ENCODE measurements at regions of chr20 and their contacts with region 1.

Region 1: GRCh38 chr20:50070991-50071888 is 41.7 kb downstream of the UBE2V1 start:
- DNase-seq: peak; percentile 48
- ATAC-seq: peak; percentile 99
- H3K4me3 ChIP-seq: peak overlapping the region; percentile 20 to 38; a peak in 3 of 4 replicates
- H3K27ac ChIP-seq: no peak overlapping the region
- H3K4me1 ChIP-seq: peaks cover 3 to 14% of the 10 kb centered on the region in 2 experiments; a peak in 3 of 4 replicates
- H3K27me3 ChIP-seq: no peaks in the 10 kb centered on the region
- CTCF ChIP-seq: peak; percentile 96 to 99 (median 98)
- POLR2A ChIP-seq: no peak
- RAD21 ChIP-seq: peak; percentile 99

Region 2: GRCh38 chr20:49888345-49888966 is 182.8 kb before region 1 on chr20:
- CTCF ChIA-PET with region 1: interaction called, 4 read pairs
- POLR2A ChIA-PET with region 1: no interaction called
- RAD21 ChIA-PET with region 1: no interaction called
- intact Hi-C with region 1: loop called (anchors 5 kb)
- DNase-seq: peak; percentile 21
- ATAC-seq: peak; percentile 84
- H3K4me3 ChIP-seq: no peak overlapping the region
- H3K27ac ChIP-seq: no peak overlapping the region
- H3K4me1 ChIP-seq: peaks cover 0 to 5% of the 10 kb centered on the region in 2 experiments; a peak in 1 of 4 replicates
- H3K27me3 ChIP-seq: no peaks in the 10 kb centered on the region
- CTCF ChIP-seq: peak; percentile 83 to 96 (median 86)
- POLR2A ChIP-seq: no peak
- RAD21 ChIP-seq: peak; percentile 82

Region 3: GRCh38 chr20:49964964-49965780 is 106.1 kb before region 1 on chr20:
- CTCF ChIA-PET with region 1: interaction called, 19 read pairs
- POLR2A ChIA-PET with region 1: no interaction called
- RAD21 ChIA-PET with region 1: interaction called in 1 of 2 experiments, 3 read pairs
- intact Hi-C with region 1: no loop called
- DNase-seq: peak; percentile 54
- ATAC-seq: peak; percentile 97
- H3K4me3 ChIP-seq: no peak overlapping the region
- H3K27ac ChIP-seq: no peak overlapping the region
- H3K4me1 ChIP-seq: peaks cover 6 to 41% of the 10 kb centered on the region in 2 experiments; a peak in 3 of 4 replicates
- H3K27me3 ChIP-seq: no peaks in the 10 kb centered on the region
- CTCF ChIP-seq: peak; percentile 59 to 99 (median 95); a peak in 5 of 6 replicates
- POLR2A ChIP-seq: no peak
- RAD21 ChIP-seq: peak; percentile 43

Region 4: GRCh38 chr20:50085452-50086365 is 14.5 kb after region 1 on chr20:
- CTCF ChIA-PET with region 1: interaction called, 21 read pairs
- POLR2A ChIA-PET with region 1: no interaction called
- RAD21 ChIA-PET with region 1: interaction called in 1 of 2 experiments, 4 read pairs
- intact Hi-C with region 1: no loop called
- DNase-seq: peak; percentile 22
- ATAC-seq: peak; percentile 84
- H3K4me3 ChIP-seq: no peak overlapping the region
- H3K27ac ChIP-seq: peak overlapping the region; percentile 42
- H3K4me1 ChIP-seq: peaks cover 11 to 29% of the 10 kb centered on the region in 2 experiments
- H3K27me3 ChIP-seq: no peaks in the 10 kb centered on the region
- CTCF ChIP-seq: peak; percentile 45 to 95 (median 79); a peak in 5 of 6 replicates
- POLR2A ChIP-seq: no peak
- RAD21 ChIP-seq: peak; percentile 65